Psoas muscle (tissue), 8 donors: ENCODE measurements at regions of chr5 and their contacts with region 1.

Region 1: GRCh38 chr5:75336625-75337339 is at the start of gene HMGCR:
- DNase-seq: peak; percentile 98 to 99
- ATAC-seq: peak; percentile 98 to 99 (median 99)
- H3K4me3 ChIP-seq: peak within 1 kb of the TSS; percentile 91
- H3K27ac ChIP-seq: peak within 1 kb of the TSS; percentile 82
- H3K4me1 ChIP-seq: peaks cover 10% of the 10 kb centered on the region
- H3K27me3 ChIP-seq: no peaks in the 10 kb centered on the region
- CTCF ChIP-seq: no peak
- total RNA-seq, gene HMGCR: 4.7 to 11.7 (median 7.1) TPM

Region 2: DNA sequence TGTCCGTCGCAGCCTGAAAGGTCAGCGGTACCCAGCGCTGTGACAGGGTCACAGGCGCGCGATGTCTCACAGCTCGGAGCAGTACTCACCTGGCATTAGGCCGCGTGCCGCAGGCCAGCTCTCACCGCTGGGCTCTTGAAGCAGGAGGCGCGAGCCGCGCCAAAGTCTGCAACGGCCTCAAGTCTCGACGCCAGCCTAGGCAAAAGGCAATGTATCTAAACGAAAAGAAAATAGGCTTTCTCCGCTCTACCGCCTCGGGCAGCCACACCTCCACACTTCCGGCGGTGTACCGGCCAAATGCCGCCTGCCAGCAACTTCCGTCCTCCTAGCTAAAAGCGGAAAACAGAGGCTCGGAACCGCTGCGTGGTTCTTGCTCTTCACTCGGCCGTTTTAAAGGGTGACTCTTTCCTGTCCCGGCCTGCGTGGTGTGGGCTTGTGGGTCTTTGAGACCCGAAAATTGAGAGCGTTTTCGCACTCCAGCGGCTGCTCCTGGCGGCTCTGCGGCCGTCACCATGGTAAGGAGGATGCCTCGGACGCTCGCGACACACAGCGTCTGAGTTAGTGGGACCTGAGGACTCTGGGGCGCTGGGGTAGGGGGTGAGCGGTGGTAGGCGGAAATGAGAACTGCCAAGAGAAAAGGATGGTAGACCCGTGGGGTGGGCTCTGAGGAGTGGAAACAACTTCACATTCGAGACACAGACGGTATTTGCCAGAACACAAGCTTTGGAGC is 569.8 kb before region 1 on chr5 and contains the starts of genes GFM2 and NSA2:
- intact Hi-C with region 1: loop called in 1 of 2 experiments (anchors 10 kb)
- DNase-seq: peak; percentile 92 to 95
- ATAC-seq: peak; percentile 98 to 99 (median 98)
- H3K4me3 ChIP-seq: peak within 1 kb of the TSS; percentile 93
- H3K27ac ChIP-seq: peak within 1 kb of the TSS; percentile 87
- H3K4me1 ChIP-seq: peaks cover 29% of the 10 kb centered on the region
- H3K27me3 ChIP-seq: no peaks in the 10 kb centered on the region
- CTCF ChIP-seq: no peak
- total RNA-seq, gene GFM2: 17.8 to 47.2 (median 29.7) TPM
- total RNA-seq, gene NSA2: 43.5 to 71.9 (median 54.2) TPM

Region 3: GRCh38 chr5:75053304-75054133 is 283.3 kb before region 1 on chr5:
- intact Hi-C with region 1: loop called (anchors 5 kb)
- DNase-seq: peak; percentile 67 to 80
- ATAC-seq: peak; percentile 69 to 82 (median 76)
- H3K4me3 ChIP-seq: peak overlapping the region; percentile 90
- H3K27ac ChIP-seq: peak overlapping the region; percentile 88
- H3K4me1 ChIP-seq: peaks cover 11% of the 10 kb centered on the region
- H3K27me3 ChIP-seq: no peaks in the 10 kb centered on the region
- CTCF ChIP-seq: peak; percentile 4

Region 4: GRCh38 chr5:75236322-75237316 is 100.2 kb before region 1 on chr5 and contains the start of gene ANKRD31:
- intact Hi-C with region 1: loop called (anchors 2 to 10 kb)
- DNase-seq: peak; percentile 88 to 90
- ATAC-seq: peak; percentile 100
- H3K4me3 ChIP-seq: peak within 1 kb of the TSS; percentile 73
- H3K27ac ChIP-seq: peak within 1 kb of the TSS; percentile 2
- H3K4me1 ChIP-seq: no peaks in the 10 kb centered on the region
- H3K27me3 ChIP-seq: no peaks in the 10 kb centered on the region
- CTCF ChIP-seq: peak; percentile 85
- total RNA-seq, gene ANKRD31: 0.04 to 0.11 (median 0.06) TPM in 3 of 4 donors, not detected in the other

Region 5: GRCh38 chr5:75681125-75681830 is 344.5 kb after region 1 on chr5:
- intact Hi-C with region 1: loop called in 1 of 2 experiments (anchors 10 kb)
- DNase-seq: no peak
- ATAC-seq: peak in 1 of 4 donors; percentile 71
- H3K4me3 ChIP-seq: no peak overlapping the region
- H3K27ac ChIP-seq: no peak overlapping the region
- H3K4me1 ChIP-seq: no peaks in the 10 kb centered on the region
- H3K27me3 ChIP-seq: no peaks in the 10 kb centered on the region
- CTCF ChIP-seq: peak; percentile 82